ENCODE measurements at regions of chr19 and their contacts with region 1.

Region 1: GRCh38 chr19:55503502-55504251 is 15.4 kb downstream of the SSC5D start:
- DNase-seq: peak; percentile 90
- ATAC-seq: peak; percentile 98
- H3K4me3 ChIP-seq: peak overlapping the region; percentile 48
- H3K27ac ChIP-seq: peak overlapping the region; percentile 5; the same call in 1 of the 2 replicates
- H3K4me1 ChIP-seq: no peaks in the 10 kb centered on the region
- H3K27me3 ChIP-seq: no peaks in the 10 kb centered on the region
- CTCF ChIP-seq: peak; percentile 97
- POLR2A ChIP-seq: peak; percentile 62; the same call in 1 of the 2 replicates
- RAD21 ChIP-seq: peak; percentile 95

Region 2: GRCh38 chr19:55407800-55408532 is 95.7 kb before region 1 on chr19:
- CTCF ChIA-PET with region 1: no interaction called
- POLR2A ChIA-PET with region 1: no interaction called
- dilution Hi-C with region 1: no loop called
- in situ Hi-C with region 1: no loop called
- intact Hi-C with region 1: loop called (anchors 5 kb)
- DNase-seq: peak; percentile 99
- ATAC-seq: peak; percentile 92
- H3K4me3 ChIP-seq: peak overlapping the region; percentile 64
- H3K27ac ChIP-seq: peak overlapping the region; percentile 94
- H3K4me1 ChIP-seq: peaks cover 17% of the 10 kb centered on the region
- H3K27me3 ChIP-seq: no peaks in the 10 kb centered on the region
- CTCF ChIP-seq: 0 out of 2 replicates have a peak, but pooled peaks have one; percentile 3
- POLR2A ChIP-seq: no peak
- RAD21 ChIP-seq: no peak

Region 3: DNA sequence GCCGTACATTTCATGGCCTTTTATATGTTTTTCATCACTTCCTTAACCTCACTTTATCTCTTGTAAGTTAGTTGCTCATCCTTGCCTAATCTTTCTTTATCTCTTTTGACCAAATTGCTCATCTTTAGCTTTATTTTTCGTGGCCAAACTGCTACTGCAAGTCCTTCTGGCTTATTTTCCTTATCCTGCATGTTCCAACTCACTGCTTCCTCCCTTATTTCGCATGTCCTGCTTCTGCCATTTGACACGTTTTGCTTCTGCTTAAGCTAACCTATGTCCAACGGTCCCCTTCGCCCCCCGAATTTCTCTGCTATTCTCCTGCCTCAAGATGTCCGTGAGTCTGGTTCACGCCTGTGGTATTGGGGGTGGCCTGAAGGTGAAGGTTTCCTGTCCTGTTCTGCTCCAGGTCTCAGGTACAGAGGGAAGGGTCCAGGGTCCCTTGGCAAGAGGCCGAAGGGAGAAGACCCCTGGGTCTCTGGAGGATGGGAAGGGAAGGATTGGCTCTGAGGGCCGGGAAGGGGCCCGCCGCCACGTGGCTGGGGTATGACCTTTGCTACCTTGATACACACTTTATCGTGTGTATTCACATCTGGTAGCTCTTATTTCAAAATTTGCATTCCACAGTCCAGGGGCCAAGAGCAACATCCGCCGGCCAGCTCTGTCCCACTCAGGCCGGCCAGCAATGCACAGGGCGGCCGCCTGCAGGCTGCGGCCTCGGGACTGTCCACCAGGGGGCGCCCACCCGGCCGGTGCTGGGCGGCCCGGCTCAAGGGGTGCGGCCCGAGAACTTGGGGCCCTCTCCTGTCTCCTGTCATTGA is 36.2 kb before region 1 on chr19:
- CTCF ChIA-PET with region 1: interaction called, 24 read pairs
- POLR2A ChIA-PET with region 1: no interaction called
- dilution Hi-C with region 1: no loop called
- in situ Hi-C with region 1: no loop called
- intact Hi-C with region 1: loop called (anchors 1 kb)
- DNase-seq: peak; percentile 65
- ATAC-seq: peak; percentile 99
- H3K4me3 ChIP-seq: no peak overlapping the region
- H3K27ac ChIP-seq: no peak overlapping the region
- H3K4me1 ChIP-seq: peaks cover 8% of the 10 kb centered on the region
- H3K27me3 ChIP-seq: no peaks in the 10 kb centered on the region
- CTCF ChIP-seq: peak; percentile 92
- POLR2A ChIP-seq: no peak
- RAD21 ChIP-seq: peak; percentile 69

Measured in IMR-90 (cell line).